CD8-positive, alpha-beta T cell (primary cell): ENCODE measurements at regions of chr2 and their contacts with region 1.

Region 1: GRCh38 chr2:233990261-233990798 is 60.2 kb upstream of the SPP2 start:
- DNase-seq: peak; percentile 15 to 93 (median 64)
- ATAC-seq: peak; percentile 82
- H3K4me3 ChIP-seq: peak overlapping the region in 1 of 2 experiments; percentile 6
- H3K4me3 Mint-ChIP-seq: peak overlapping the region; percentile 19
- H3K27ac ChIP-seq: peak overlapping the region; percentile 3 to 44
- H3K27ac Mint-ChIP-seq: peak overlapping the region; percentile 87
- H3K4me1 ChIP-seq: peaks cover 48% of the 10 kb centered on the region
- H3K4me1 Mint-ChIP-seq: peaks cover 67% of the 10 kb centered on the region
- H3K27me3 ChIP-seq: no peaks in the 10 kb centered on the region
- H3K27me3 Mint-ChIP-seq: no peaks in the 10 kb centered on the region
- CTCF ChIP-seq: no peak

Region 2: GRCh38 chr2:233470011-233470687 is 520.2 kb before region 1 on chr2:
- CTCF ChIA-PET with region 1: no interaction called
- POLR2A ChIA-PET with region 1: no interaction called
- intact Hi-C with region 1: no loop called
- DNase-seq: peak in 1 of 9 experiments; percentile 4
- ATAC-seq: no peak
- H3K4me3 ChIP-seq: no peak overlapping the region
- H3K4me3 Mint-ChIP-seq: no peak overlapping the region
- H3K27ac ChIP-seq: no peak overlapping the region
- H3K27ac Mint-ChIP-seq: peak overlapping the region; percentile 45
- H3K4me1 ChIP-seq: no peaks in the 10 kb centered on the region
- H3K4me1 Mint-ChIP-seq: no peaks in the 10 kb centered on the region
- H3K27me3 ChIP-seq: no peaks in the 10 kb centered on the region
- H3K27me3 Mint-ChIP-seq: no peaks in the 10 kb centered on the region
- CTCF ChIP-seq: no peak

Region 3: GRCh38 chr2:233966388-233966787 is 23.9 kb before region 1 on chr2:
- CTCF ChIA-PET with region 1: no interaction called
- POLR2A ChIA-PET with region 1: no interaction called
- intact Hi-C with region 1: no loop called
- DNase-seq: no peak
- ATAC-seq: no peak
- H3K4me3 ChIP-seq: no peak overlapping the region
- H3K4me3 Mint-ChIP-seq: no peak overlapping the region
- H3K27ac ChIP-seq: no peak overlapping the region
- H3K27ac Mint-ChIP-seq: no peak overlapping the region
- H3K4me1 ChIP-seq: peaks cover 6% of the 10 kb centered on the region
- H3K4me1 Mint-ChIP-seq: peaks cover 13% of the 10 kb centered on the region
- H3K27me3 ChIP-seq: no peaks in the 10 kb centered on the region
- H3K27me3 Mint-ChIP-seq: peaks cover 2% of the 10 kb centered on the region
- CTCF ChIP-seq: no peak

Region 4: DNA sequence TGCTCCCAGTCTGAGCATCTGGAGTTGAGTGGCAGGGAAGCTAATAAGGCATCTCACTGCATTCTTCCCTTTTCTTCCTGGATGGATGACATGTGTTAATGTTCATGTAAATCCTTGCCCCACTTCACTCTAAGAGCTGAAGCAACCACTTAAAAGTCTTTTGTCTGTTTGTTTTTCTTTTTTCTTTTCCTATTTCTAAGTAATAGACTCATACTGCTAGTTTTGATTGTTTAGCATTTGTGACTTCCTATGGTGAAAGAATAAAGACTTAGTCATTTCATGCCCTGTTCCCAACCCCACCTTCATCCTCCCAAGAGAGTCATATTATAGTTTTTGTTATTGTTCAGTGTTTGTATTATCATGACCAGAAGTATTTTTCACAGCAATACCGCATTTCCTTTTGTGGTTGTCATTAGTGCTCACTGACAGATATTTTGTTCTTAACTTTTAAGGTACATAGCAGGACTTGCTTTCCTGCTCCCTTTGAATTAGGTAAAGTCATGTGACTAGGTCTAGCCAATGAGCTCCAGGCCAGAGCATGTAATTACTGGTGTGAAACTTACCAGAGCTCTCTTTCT is 42.0 kb after region 1 on chr2:
- CTCF ChIA-PET with region 1: no interaction called
- POLR2A ChIA-PET with region 1: interaction called, 4 read pairs
- intact Hi-C with region 1: loop called (anchors 2 to 5 kb)
- DNase-seq: peak in 6 of 9 experiments; percentile 19 to 88 (median 58)
- ATAC-seq: peak; percentile 86
- H3K4me3 ChIP-seq: no peak overlapping the region
- H3K4me3 Mint-ChIP-seq: no peak overlapping the region
- H3K27ac ChIP-seq: peak overlapping the region in 1 of 2 experiments; percentile 62
- H3K27ac Mint-ChIP-seq: peak overlapping the region; percentile 79
- H3K4me1 ChIP-seq: peaks cover 23% of the 10 kb centered on the region
- H3K4me1 Mint-ChIP-seq: peaks cover 45% of the 10 kb centered on the region
- H3K27me3 ChIP-seq: no peaks in the 10 kb centered on the region
- H3K27me3 Mint-ChIP-seq: no peaks in the 10 kb centered on the region
- CTCF ChIP-seq: no peak

Region 5: GRCh38 chr2:234083572-234084348 is 93.4 kb after region 1 on chr2:
- CTCF ChIA-PET with region 1: no interaction called
- POLR2A ChIA-PET with region 1: no interaction called
- intact Hi-C with region 1: no loop called
- DNase-seq: no peak
- ATAC-seq: no peak
- H3K4me3 ChIP-seq: no peak overlapping the region
- H3K4me3 Mint-ChIP-seq: no peak overlapping the region
- H3K27ac ChIP-seq: no peak overlapping the region
- H3K27ac Mint-ChIP-seq: no peak overlapping the region
- H3K4me1 ChIP-seq: no peaks in the 10 kb centered on the region
- H3K4me1 Mint-ChIP-seq: peaks cover 6% of the 10 kb centered on the region
- H3K27me3 ChIP-seq: no peaks in the 10 kb centered on the region
- H3K27me3 Mint-ChIP-seq: peaks cover 5% of the 10 kb centered on the region
- CTCF ChIP-seq: no peak

Region 6: GRCh38 chr2:234135720-234136221 is 145.4 kb after region 1 on chr2:
- CTCF ChIA-PET with region 1: interaction called, 10 read pairs
- POLR2A ChIA-PET with region 1: interaction called, 3 read pairs
- intact Hi-C with region 1: no loop called
- DNase-seq: peak; percentile 16 to 77 (median 48)
- ATAC-seq: peak; percentile 56
- H3K4me3 ChIP-seq: no peak overlapping the region
- H3K4me3 Mint-ChIP-seq: no peak overlapping the region
- H3K27ac ChIP-seq: no peak overlapping the region
- H3K27ac Mint-ChIP-seq: peak overlapping the region; percentile 64
- H3K4me1 ChIP-seq: peaks cover 25% of the 10 kb centered on the region
- H3K4me1 Mint-ChIP-seq: peaks cover 30% of the 10 kb centered on the region
- H3K27me3 ChIP-seq: no peaks in the 10 kb centered on the region
- H3K27me3 Mint-ChIP-seq: no peaks in the 10 kb centered on the region
- CTCF ChIP-seq: peak; percentile 62

Region 7: DNA sequence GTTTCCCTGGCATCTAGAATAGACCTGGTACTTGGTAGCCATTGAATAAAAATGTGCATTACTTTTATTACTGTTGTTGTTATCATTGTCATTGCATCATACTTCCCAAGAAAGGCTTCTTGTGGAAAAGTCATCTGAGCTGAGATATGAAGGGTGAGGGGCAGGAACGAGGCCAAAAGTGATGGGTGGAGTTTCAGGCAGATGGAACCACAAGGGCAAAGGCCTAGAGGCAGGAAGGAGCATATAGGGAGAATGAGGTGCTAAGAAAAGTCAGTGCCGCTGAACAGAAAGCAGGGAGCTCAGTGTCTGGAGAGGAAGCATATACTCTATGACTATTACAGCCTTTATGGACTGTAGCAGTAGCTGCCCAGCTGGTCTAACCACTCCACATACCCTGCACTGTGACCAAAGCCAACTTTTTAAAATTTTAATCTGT is 279.5 kb after region 1 on chr2:
- CTCF ChIA-PET with region 1: no interaction called
- POLR2A ChIA-PET with region 1: no interaction called
- intact Hi-C with region 1: no loop called
- DNase-seq: no peak
- ATAC-seq: no peak
- H3K4me3 ChIP-seq: no peak overlapping the region
- H3K4me3 Mint-ChIP-seq: no peak overlapping the region
- H3K27ac ChIP-seq: no peak overlapping the region
- H3K27ac Mint-ChIP-seq: no peak overlapping the region
- H3K4me1 ChIP-seq: peaks cover 28% of the 10 kb centered on the region
- H3K4me1 Mint-ChIP-seq: peaks cover 42% of the 10 kb centered on the region
- H3K27me3 ChIP-seq: no peaks in the 10 kb centered on the region
- H3K27me3 Mint-ChIP-seq: no peaks in the 10 kb centered on the region
- CTCF ChIP-seq: no peak